Esophagus squamous epithelium (tissue), 5 donors: ENCODE measurements at regions of chr21 and their contacts with region 1.

Region 1: GRCh38 chr21:17250778-17251241 is 262.0 kb upstream of the CXADR start:
- DNase-seq: no peak
- H3K4me3 ChIP-seq: no peak overlapping the region
- H3K27ac ChIP-seq: no peak overlapping the region
- H3K4me1 ChIP-seq: no peaks in the 10 kb centered on the region
- H3K27me3 ChIP-seq: no peaks in the 10 kb centered on the region
- CTCF ChIP-seq: no peak
- POLR2A ChIP-seq: no peak

Region 2: GRCh38 chr21:16194095-16194787 is 1056.6 kb before region 1 on chr21:
- intact Hi-C with region 1: no loop called
- DNase-seq: no peak
- H3K4me3 ChIP-seq: peak overlapping the region; percentile 25 to 62 (median 46)
- H3K27ac ChIP-seq: peak overlapping the region; percentile 82 to 90 (median 88)
- H3K4me1 ChIP-seq: peaks cover 0 to 31% (median 10%) of the 10 kb centered on the region in 3 donors
- H3K27me3 ChIP-seq: no peaks in the 10 kb centered on the region
- CTCF ChIP-seq: peak in 1 of 6 experiments; percentile 13
- POLR2A ChIP-seq: no peak

Region 3: DNA sequence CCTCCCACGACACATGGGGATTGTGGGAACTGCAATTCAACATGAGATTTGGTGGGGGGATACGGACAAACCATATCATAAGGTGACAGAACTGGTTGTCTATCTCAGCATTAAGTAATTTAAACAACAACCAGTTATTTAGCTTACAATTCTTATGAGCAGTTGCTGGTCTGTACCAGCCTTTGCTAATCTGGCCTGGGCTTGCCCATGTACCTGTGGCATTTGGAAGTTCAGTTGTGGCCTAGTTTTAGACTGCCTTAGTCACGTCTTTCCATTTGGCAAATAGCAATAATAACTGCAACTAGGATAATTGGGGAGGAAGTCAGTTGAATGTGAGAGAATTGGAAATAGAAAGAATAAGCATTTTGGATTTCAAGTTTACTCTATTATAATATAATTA is 179.7 kb before region 1 on chr21:
- intact Hi-C with region 1: no loop called
- DNase-seq: no peak
- H3K4me3 ChIP-seq: no peak overlapping the region
- H3K27ac ChIP-seq: peak overlapping the region in 2 of 4 donors; percentile 22 to 56
- H3K4me1 ChIP-seq: peaks cover 0 to 8% (median 0%) of the 10 kb centered on the region in 3 donors
- H3K27me3 ChIP-seq: no peaks in the 10 kb centered on the region
- CTCF ChIP-seq: no peak
- POLR2A ChIP-seq: no peak

Region 4: GRCh38 chr21:17295997-17296396 is 45.2 kb after region 1 on chr21:
- intact Hi-C with region 1: loop called (anchors 10 kb)
- DNase-seq: no peak
- H3K4me3 ChIP-seq: no peak overlapping the region
- H3K27ac ChIP-seq: no peak overlapping the region
- H3K4me1 ChIP-seq: peaks cover 0 to 9% (median 0%) of the 10 kb centered on the region in 3 donors
- H3K27me3 ChIP-seq: no peaks in the 10 kb centered on the region
- CTCF ChIP-seq: no peak
- POLR2A ChIP-seq: no peak

Region 5: GRCh38 chr21:17451364-17451891 is 200.6 kb after region 1 on chr21:
- intact Hi-C with region 1: no loop called
- DNase-seq: no peak
- H3K4me3 ChIP-seq: no peak overlapping the region
- H3K27ac ChIP-seq: peak overlapping the region; percentile 11 to 56 (median 32)
- H3K4me1 ChIP-seq: peaks cover 8 to 41% (median 19%) of the 10 kb centered on the region in 3 donors
- H3K27me3 ChIP-seq: no peaks in the 10 kb centered on the region
- CTCF ChIP-seq: no peak
- POLR2A ChIP-seq: no peak